ENCODE measurements at regions of chr12 and their contacts with region 1.

Region 1: GRCh38 chr12:121060149-121061001 is 21.3 kb upstream of the OASL start:
- DNase-seq: peak; percentile 17 to 84
- H3K4me3 ChIP-seq: peak overlapping the region in 3 of 4 experiments; percentile 12 to 46 (median 29); a peak in 5 of 8 replicates
- H3K27ac ChIP-seq: peak overlapping the region; percentile 59; the same call in 1 of the 2 replicates
- H3K4me1 ChIP-seq: peaks cover 0 to 3% (median 0%) of the 10 kb centered on the region in 4 experiments; a peak in 1 of 7 replicates
- H3K27me3 ChIP-seq: no peaks in the 10 kb centered on the region
- CTCF ChIP-seq: peak; percentile 41 to 57 (median 53)
- EP300 ChIP-seq: no peak
- POLR2A ChIP-seq: no peak
- RAD21 ChIP-seq: peak; percentile 52 to 61

Region 2: GRCh38 chr12:121033625-121034349 is 26.6 kb before region 1 on chr12:
- CTCF ChIA-PET with region 1: interaction called, 11 read pairs
- POLR2A ChIA-PET with region 1: no interaction called
- DNase-seq: no peak
- H3K4me3 ChIP-seq: no peak overlapping the region
- H3K27ac ChIP-seq: no peak overlapping the region
- H3K4me1 ChIP-seq: peaks cover 0 to 5% (median 4%) of the 10 kb centered on the region in 4 experiments; a peak in 4 of 7 replicates
- H3K27me3 ChIP-seq: no peaks in the 10 kb centered on the region
- CTCF ChIP-seq: no peak
- EP300 ChIP-seq: no peak
- POLR2A ChIP-seq: no peak
- RAD21 ChIP-seq: no peak

Region 3: GRCh38 chr12:121079736-121080272 is 19.4 kb after region 1 on chr12:
- CTCF ChIA-PET with region 1: interaction called, 20 read pairs
- POLR2A ChIA-PET with region 1: no interaction called
- DNase-seq: peak in 1 of 2 experiments; percentile 29
- H3K4me3 ChIP-seq: no peak overlapping the region
- H3K27ac ChIP-seq: no peak overlapping the region
- H3K4me1 ChIP-seq: no peaks in the 10 kb centered on the region
- H3K27me3 ChIP-seq: peaks cover 0 to 2% (median 0%) of the 10 kb centered on the region in 4 experiments; a peak in 1 of 7 replicates
- CTCF ChIP-seq: no peak
- EP300 ChIP-seq: no peak
- POLR2A ChIP-seq: no peak
- RAD21 ChIP-seq: no peak

Region 4: GRCh38 chr12:121089031-121089812 is 28.8 kb after region 1 on chr12:
- CTCF ChIA-PET with region 1: interaction called, 23 read pairs
- POLR2A ChIA-PET with region 1: interaction called, 3 read pairs
- DNase-seq: peak in 1 of 2 experiments; percentile 54
- H3K4me3 ChIP-seq: no peak overlapping the region
- H3K27ac ChIP-seq: no peak overlapping the region
- H3K4me1 ChIP-seq: peaks cover 0 to 4% (median 0%) of the 10 kb centered on the region in 4 experiments; a peak in 1 of 7 replicates
- H3K27me3 ChIP-seq: no peaks in the 10 kb centered on the region
- CTCF ChIP-seq: peak; percentile 25 to 46 (median 40)
- EP300 ChIP-seq: no peak
- POLR2A ChIP-seq: no peak
- RAD21 ChIP-seq: peak in 1 of 2 experiments; percentile 21; a peak in 1 of 4 replicates

Region 5: GRCh38 chr12:121095544-121096198 is 35.3 kb after region 1 on chr12:
- CTCF ChIA-PET with region 1: interaction called, 12 read pairs
- POLR2A ChIA-PET with region 1: interaction called, 3 read pairs
- DNase-seq: peak in 1 of 2 experiments; percentile 91
- H3K4me3 ChIP-seq: peak overlapping the region; percentile 9 to 49 (median 26); a peak in 5 of 8 replicates
- H3K27ac ChIP-seq: no peak overlapping the region
- H3K4me1 ChIP-seq: peaks cover 0 to 3% (median under 1%) of the 10 kb centered on the region in 4 experiments; a peak in 1 of 7 replicates
- H3K27me3 ChIP-seq: peaks cover 0 to 7% (median 5%) of the 10 kb centered on the region in 4 experiments; a peak in 6 of 7 replicates
- CTCF ChIP-seq: peak; percentile 81 to 88 (median 83)
- EP300 ChIP-seq: no peak
- POLR2A ChIP-seq: no peak
- RAD21 ChIP-seq: peak; percentile 70 to 80

Region 6: DNA sequence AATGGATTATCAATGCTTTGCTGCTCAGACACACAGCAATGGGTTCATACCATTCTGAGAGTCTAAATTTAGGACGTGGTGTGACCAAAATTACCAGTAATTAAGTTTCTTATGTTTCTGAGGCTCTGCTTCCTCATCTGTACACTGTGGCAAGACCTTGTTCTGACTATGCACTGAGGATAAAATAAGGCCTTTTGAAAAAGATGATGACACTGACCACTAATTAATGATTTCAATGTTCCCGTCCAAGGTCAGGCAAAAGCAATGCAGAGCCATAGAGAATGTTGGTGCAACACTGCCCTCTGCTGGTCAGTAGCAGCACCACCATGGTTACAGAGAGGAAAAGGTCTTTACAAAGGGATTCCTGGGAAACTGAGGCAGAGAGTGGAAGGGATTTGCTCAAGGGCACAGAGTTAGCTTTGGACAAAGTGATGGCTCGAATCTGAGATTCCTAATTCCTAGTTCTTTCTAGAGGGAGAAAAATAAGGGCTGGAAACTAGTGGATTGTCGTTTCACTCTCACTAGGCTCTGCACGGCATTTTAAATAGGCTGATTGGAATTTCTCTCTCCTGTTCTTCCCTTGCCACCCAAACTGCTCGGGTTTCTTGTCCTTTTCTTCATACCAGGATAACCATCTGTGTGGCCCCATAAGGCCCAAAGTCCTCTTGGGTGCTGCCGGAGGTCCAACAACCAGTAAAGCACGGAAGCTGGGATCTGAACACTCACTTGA is 50.0 kb after region 1 on chr12:
- CTCF ChIA-PET with region 1: interaction called, 26 read pairs
- POLR2A ChIA-PET with region 1: no interaction called
- DNase-seq: peak in 1 of 2 experiments; percentile 68
- H3K4me3 ChIP-seq: no peak overlapping the region
- H3K27ac ChIP-seq: no peak overlapping the region
- H3K4me1 ChIP-seq: no peaks in the 10 kb centered on the region
- H3K27me3 ChIP-seq: no peaks in the 10 kb centered on the region
- CTCF ChIP-seq: peak; percentile 63 to 97 (median 90)
- EP300 ChIP-seq: no peak
- POLR2A ChIP-seq: no peak
- RAD21 ChIP-seq: peak; percentile 94 to 96

Measured in H1 (cell line).